Activated CD8-positive, alpha-beta memory T cell treated with anti-CD3 and anti-CD28 coated beads, Interleukin-2, amount 10 ng/mL, durations not matched to agents 7 days and 5 days (primary cell): ENCODE measurements at regions of chr17 and their contacts with region 1.

Region 1: DNA sequence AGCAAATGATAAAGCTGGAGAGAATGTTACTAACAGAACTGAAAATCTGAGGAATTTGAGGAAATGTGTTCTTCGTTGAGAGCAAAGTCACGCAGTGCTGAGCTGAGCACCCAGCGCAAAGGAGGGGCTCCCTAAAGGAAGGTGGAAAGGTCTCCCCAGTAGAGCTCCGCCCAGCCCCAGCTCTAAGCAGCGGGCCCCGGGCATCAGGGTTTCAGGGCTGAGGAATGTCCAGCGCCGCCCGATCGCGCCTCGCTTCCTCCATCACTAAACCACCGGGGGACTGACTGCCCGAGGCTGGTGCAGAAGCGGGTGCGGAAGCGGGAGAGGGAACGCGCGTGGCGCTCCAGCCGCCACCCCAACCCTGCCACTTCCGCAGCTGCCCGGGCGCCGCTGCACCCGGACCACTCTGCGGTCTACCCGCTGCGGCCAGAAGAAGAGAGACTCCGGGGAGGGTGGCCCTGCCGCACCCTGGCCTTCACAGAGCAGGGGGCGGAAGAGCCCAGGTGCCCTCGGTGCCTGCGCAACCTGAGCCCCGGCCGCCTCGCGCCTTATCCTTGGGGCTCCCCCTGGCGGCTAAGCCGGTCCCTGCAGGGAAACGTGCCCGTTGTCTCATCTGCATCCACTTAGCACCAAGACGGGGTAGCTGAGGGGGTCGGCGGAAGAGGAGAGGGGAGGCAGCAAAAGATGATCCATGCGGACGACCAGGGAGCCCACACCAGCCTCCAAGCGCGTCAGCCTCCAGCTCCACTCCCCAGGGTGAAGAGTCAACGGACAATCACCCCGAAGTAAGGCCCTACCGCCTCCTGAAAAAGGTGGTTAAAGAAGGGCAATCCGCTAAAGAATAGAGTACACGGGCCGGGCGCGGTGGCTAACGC is 12.4 kb upstream of the GUCY2D start:
- DNase-seq: peak; percentile 93
- ATAC-seq: peak; percentile 87
- H3K4me3 Mint-ChIP-seq: peak overlapping the region; percentile 69
- H3K27ac Mint-ChIP-seq: peak overlapping the region; percentile 88
- H3K4me1 Mint-ChIP-seq: peaks cover 25% of the 10 kb centered on the region
- H3K27me3 Mint-ChIP-seq: peaks cover 22% of the 10 kb centered on the region

Region 2: DNA sequence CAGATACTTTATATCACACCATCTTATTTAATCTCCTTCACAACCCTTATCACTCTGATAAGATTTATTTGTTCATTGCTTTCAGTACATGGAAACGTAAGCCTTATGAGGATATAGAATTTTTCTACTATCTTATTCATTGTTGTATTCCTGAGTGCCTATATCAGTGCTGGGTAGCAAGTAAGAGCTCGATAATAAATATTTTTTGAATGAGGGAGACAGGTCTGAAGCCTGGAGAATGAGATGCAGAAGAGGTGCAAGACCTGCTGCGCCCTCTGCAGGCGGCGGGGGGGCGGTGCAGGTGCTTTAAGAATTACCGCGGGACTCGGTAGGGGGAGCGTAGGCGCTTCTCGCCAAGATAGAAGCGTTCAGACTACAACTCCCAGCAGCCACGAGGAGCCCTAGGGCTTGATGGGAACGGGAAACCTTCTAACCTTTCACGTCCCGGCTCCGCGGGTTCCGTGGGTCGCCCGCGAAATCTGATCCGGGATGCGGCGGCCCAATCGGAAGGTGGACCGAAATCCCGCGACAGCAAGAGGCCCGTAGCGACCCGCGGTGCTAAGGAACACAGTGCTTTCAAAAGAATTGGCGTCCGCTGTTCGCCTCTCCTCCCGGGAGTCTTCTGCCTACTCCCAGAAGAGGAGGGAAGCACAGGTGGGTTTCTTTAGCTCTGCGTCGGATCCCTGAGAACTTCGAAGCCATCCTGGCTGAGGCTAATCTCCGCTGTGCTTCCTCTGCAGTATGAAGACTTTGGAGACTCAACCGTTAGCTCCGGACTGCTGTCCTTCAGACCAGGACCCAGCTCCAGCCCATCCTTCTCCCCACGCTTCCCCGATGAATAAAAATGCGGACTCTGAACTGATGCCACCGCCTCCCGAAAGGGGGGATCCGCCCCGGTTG is 301.9 kb before region 1 on chr17 and contains the start of gene WRAP53:
- CTCF ChIA-PET with region 1: interaction called, 11 read pairs
- DNase-seq: peak; percentile 98
- ATAC-seq: peak; percentile 82
- H3K4me3 Mint-ChIP-seq: peak within 1 kb of the TSS; percentile 96
- H3K27ac Mint-ChIP-seq: peak within 1 kb of the TSS; percentile 97
- H3K4me1 Mint-ChIP-seq: peaks cover 33% of the 10 kb centered on the region
- H3K27me3 Mint-ChIP-seq: no peaks in the 10 kb centered on the region
- total RNA-seq, gene WRAP53: 28.0 to 29.0 TPM

Region 3: DNA sequence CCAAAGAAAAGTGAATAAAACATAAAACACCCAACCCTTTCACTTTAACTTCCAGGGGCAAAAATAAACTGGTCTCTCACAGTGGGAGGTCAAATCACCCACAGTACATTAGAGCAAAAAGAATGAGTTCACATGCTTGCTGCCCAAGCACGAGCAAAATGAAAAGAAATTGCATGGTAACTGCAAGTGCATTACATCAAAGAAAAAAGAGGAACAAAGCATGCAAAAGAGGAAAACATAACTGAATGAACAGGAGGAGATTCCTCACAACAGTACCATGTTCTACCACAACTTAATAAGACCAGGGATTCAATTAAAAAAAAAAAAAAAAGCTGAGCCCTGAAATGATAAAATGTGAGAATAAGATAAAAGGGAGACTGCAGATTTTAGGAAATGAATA is 260.2 kb before region 1 on chr17:
- CTCF ChIA-PET with region 1: no interaction called
- DNase-seq: no peak
- ATAC-seq: no peak
- H3K4me3 Mint-ChIP-seq: no peak overlapping the region
- H3K27ac Mint-ChIP-seq: no peak overlapping the region
- H3K4me1 Mint-ChIP-seq: no peaks in the 10 kb centered on the region
- H3K27me3 Mint-ChIP-seq: peaks cover 31% of the 10 kb centered on the region

Region 4: GRCh38 chr17:7851438-7852256 is 138.4 kb before region 1 on chr17:
- CTCF ChIA-PET with region 1: interaction called, 41 read pairs
- DNase-seq: peak; percentile 96
- ATAC-seq: peak; percentile 93
- H3K4me3 Mint-ChIP-seq: peak overlapping the region; percentile 89
- H3K27ac Mint-ChIP-seq: peak overlapping the region; percentile 66
- H3K4me1 Mint-ChIP-seq: peaks cover 48% of the 10 kb centered on the region
- H3K27me3 Mint-ChIP-seq: no peaks in the 10 kb centered on the region

Region 5: GRCh38 chr17:7867881-7868329 is 122.1 kb before region 1 on chr17:
- CTCF ChIA-PET with region 1: interaction called, 107 read pairs
- DNase-seq: peak; percentile 64
- ATAC-seq: peak; percentile 91
- H3K4me3 Mint-ChIP-seq: peak overlapping the region; percentile 49
- H3K27ac Mint-ChIP-seq: peak overlapping the region; percentile 81
- H3K4me1 Mint-ChIP-seq: peaks cover 29% of the 10 kb centered on the region
- H3K27me3 Mint-ChIP-seq: no peaks in the 10 kb centered on the region

Region 6: GRCh38 chr17:7931709-7932482 is 58.1 kb before region 1 on chr17 and contains the starts of genes CNTROB and TRAPPC1:
- CTCF ChIA-PET with region 1: interaction called, 130 read pairs
- DNase-seq: peak; percentile 100
- ATAC-seq: peak; percentile 97
- H3K4me3 Mint-ChIP-seq: peak within 1 kb of the TSS; percentile 97
- H3K27ac Mint-ChIP-seq: peak within 1 kb of the TSS; percentile 97
- H3K4me1 Mint-ChIP-seq: peaks cover 54% of the 10 kb centered on the region
- H3K27me3 Mint-ChIP-seq: no peaks in the 10 kb centered on the region
- total RNA-seq, gene CNTROB: 56.8 to 69.2 TPM
- total RNA-seq, gene TRAPPC1: 216 to 245 TPM

Region 7: DNA sequence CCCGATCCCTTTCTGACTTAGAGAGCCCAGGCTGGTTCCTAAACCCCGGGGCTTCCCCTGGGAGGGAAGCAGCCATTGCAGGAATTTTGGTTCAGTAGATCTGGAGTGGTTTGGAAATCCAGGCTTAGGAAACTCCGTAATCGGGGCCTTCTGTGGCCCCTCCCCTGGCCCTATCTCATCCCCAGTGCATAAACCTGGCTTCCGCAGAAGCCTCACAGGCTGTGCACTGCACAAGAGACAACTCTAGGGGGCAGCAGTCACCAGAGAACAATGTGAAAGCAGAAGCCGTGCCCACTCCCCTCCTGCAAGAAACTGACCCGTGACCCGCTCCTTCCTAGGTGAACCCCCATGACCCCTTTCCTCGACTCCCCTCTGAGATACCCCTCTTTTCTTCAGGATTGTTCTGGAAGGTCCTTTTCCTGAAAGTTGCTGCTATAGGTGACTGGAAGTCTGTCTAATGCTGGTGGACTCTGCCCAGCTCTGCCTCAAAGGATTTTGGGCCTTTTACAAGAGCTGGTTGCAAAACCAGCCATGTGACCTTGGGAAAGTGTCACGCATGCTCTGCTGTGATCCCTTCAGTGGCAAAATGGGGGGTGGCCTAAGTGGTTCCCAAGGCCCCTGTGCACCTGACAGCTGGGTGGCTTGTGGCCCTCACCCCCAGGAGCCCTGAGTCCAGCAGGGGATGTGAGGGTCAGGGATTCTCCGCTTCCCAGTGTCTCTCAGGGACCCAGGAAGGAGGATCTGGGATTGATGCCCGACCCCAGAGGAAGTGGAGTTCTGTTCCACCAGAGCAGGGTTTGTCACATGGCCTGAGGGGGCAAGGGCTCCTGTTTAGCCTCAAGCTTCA is 26.8 kb after region 1 on chr17:
- CTCF ChIA-PET with region 1: interaction called, 11 read pairs
- DNase-seq: peak; percentile 76
- ATAC-seq: peak; percentile 82
- H3K4me3 Mint-ChIP-seq: peak overlapping the region; percentile 49
- H3K27ac Mint-ChIP-seq: no peak overlapping the region
- H3K4me1 Mint-ChIP-seq: peaks cover 8% of the 10 kb centered on the region
- H3K27me3 Mint-ChIP-seq: peaks cover 39% of the 10 kb centered on the region